HEK293T (cell line): ENCODE measurements at regions of chr1 and their contacts with region 1.

Region 1: GRCh38 chr1:225578251-225578950 is 74.5 kb downstream of the ENAH start:
- DNase-seq: no peak

Region 2: GRCh38 chr1:225508538-225509375 is 69.6 kb before region 1 on chr1:
- CTCF ChIA-PET with region 1: no interaction called
- POLR2A ChIA-PET with region 1: no interaction called
- DNase-seq: peak; percentile 53

Region 3: DNA sequence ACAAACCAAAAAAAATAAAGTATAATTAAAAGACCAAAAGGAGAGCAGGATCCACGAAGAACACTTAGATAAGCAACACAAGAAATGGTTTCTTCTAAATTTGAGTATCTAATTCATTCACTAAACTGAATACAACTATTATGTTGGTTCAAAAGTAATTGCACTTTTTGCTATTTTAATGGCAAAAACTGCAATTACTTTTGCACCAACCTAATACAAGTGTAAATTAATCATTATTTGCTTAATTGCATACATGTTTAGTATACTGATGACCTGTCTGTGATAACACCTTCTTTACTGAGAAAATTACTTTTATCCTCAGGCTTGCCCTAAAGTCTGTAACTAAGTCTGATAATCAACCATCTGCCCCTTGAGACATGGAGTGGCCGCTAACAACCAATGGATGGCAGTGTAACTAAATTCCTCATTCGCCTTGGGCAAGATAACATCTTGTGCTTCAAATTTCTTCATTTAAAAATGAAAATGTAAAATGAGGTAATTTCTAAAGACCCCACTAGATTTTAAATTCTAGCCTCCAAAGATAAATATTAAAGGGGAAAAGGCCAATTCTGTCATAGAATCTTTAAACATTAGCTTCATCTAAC is 10.7 kb before region 1 on chr1:
- CTCF ChIA-PET with region 1: interaction called, 10 read pairs
- POLR2A ChIA-PET with region 1: no interaction called
- DNase-seq: peak; percentile 43

Region 4: DNA sequence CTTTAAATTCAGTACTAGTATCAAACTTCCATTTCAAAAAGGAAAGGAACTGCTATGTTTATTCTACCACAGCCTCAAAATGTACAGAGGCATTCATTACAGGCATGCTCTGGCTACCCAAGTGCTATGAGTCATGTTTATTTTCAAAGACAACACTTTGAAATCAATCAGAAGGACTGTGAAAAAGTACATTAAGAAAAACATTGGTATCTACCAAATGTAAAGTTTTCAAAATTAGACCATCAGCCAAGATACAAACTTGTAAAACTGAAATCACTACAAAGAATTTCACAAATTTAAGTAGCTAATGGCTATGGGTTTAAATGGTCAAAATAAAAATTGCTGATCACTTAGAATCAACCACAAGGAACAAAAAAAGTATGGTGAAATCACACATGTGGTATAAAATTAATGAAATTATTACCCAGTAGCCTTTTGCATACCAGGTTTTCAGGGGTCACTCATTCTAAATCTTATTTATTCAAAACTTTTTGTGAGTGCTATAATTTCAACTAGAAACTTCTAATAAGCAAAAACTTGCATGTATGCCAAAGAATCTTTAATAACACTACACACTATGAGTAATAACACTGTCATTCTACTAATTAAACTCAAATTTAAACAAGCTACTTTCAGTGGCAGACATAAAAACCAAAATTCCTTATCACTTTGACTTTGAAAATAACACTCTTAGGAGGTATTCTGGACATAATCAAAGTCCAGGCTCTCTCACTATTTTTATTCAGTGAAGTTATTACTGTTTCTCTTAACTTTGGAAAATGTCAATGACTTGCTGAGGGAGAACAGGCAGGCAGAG is 25.3 kb after region 1 on chr1:
- CTCF ChIA-PET with region 1: no interaction called
- POLR2A ChIA-PET with region 1: no interaction called
- DNase-seq: no peak

Region 5: GRCh38 chr1:225626698-225627097 is 48.3 kb after region 1 on chr1:
- CTCF ChIA-PET with region 1: no interaction called
- POLR2A ChIA-PET with region 1: no interaction called
- DNase-seq: no peak